Panc1 (cell line): ENCODE measurements at regions of chr5 and their contacts with region 1.

Region 1: DNA sequence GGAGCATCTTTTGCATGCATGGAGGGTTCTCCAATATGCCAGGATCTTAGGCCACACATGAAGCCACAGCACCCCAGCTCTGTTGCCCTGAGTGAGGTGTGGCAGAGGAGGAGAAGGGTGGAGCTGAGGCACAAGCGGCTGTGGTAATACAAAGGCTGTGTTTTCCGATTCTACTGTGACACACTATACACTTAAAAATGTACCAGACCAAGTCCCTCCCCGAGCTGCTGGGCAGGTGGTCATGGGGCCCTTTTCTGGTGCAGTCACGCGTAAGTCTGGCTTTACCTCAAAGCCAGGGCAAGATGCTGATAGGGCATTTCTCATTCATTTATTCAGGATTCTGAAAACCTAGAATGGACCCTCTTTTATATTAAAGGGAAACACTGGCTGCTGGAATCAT is 3.7 kb downstream of the ADGRV1 start:
- DNase-seq: no peak
- ATAC-seq: no peak
- H3K4me3 ChIP-seq: no peak overlapping the region
- H3K27ac ChIP-seq: no peak overlapping the region
- H3K4me1 ChIP-seq: no peaks in the 10 kb centered on the region
- H3K27me3 ChIP-seq: peaks cover 34% of the 10 kb centered on the region
- CTCF ChIP-seq: no peak

Region 2: DNA sequence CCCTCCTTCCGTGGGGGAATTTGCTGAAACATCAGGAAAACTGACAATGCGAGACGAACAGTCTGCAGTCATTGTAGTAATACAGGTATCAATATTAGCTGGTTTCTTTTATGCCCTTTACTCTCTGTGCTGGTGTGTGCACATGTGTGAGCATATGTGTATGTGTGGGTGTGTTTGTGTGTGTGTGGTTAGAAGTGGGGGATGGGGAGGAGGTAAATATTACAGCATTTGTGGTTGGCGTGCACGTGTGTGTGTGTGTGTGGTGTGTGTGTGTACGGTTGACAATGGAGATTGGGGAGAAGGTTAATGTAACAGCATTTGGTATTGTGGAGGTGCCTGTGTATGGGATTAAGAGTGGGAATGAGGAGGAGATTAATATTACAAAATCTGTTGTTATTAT is 215.6 kb after region 1 on chr5:
- CTCF ChIA-PET with region 1: no interaction called
- POLR2A ChIA-PET with region 1: no interaction called
- in situ Hi-C with region 1: no loop called
- intact Hi-C with region 1: loop called (anchors 10 kb)
- DNase-seq: no peak
- ATAC-seq: no peak
- H3K4me3 ChIP-seq: no peak overlapping the region
- H3K27ac ChIP-seq: no peak overlapping the region
- H3K4me1 ChIP-seq: no peaks in the 10 kb centered on the region
- H3K27me3 ChIP-seq: peaks cover 9% of the 10 kb centered on the region
- CTCF ChIP-seq: no peak